Activated CD4-positive, alpha-beta memory T cell treated with anti-CD3 and anti-CD28 coated beads for 36 hours (primary cell): ENCODE measurements at regions of chr17 and their contacts with region 1.

Region 1: GRCh38 chr17:76153640-76154039 is 12.6 kb upstream of the FOXJ1 start:
- DNase-seq: no peak
- H3K4me3 Mint-ChIP-seq: no peak overlapping the region
- H3K27ac Mint-ChIP-seq: no peak overlapping the region
- H3K4me1 Mint-ChIP-seq: peaks cover 26% of the 10 kb centered on the region
- H3K27me3 Mint-ChIP-seq: no peaks in the 10 kb centered on the region

Region 2: GRCh38 chr17:76121932-76122430 is 31.7 kb before region 1 on chr17:
- CTCF ChIA-PET with region 1: interaction called, 12 read pairs
- POLR2A ChIA-PET with region 1: no interaction called
- intact Hi-C with region 1: no loop called
- DNase-seq: peak; percentile 35
- H3K4me3 Mint-ChIP-seq: no peak overlapping the region
- H3K27ac Mint-ChIP-seq: no peak overlapping the region
- H3K4me1 Mint-ChIP-seq: peaks cover 9% of the 10 kb centered on the region
- H3K27me3 Mint-ChIP-seq: no peaks in the 10 kb centered on the region